Dendritic cell treated with granulocyte-macrophage colony-stimulating factor and Interleukin-4, amounts not matched to agents 40 ng/mL and 50 ng/mL, for 4 days (primary cell): ENCODE measurements at regions of chr7 and their contacts with region 1.

Region 1: DNA sequence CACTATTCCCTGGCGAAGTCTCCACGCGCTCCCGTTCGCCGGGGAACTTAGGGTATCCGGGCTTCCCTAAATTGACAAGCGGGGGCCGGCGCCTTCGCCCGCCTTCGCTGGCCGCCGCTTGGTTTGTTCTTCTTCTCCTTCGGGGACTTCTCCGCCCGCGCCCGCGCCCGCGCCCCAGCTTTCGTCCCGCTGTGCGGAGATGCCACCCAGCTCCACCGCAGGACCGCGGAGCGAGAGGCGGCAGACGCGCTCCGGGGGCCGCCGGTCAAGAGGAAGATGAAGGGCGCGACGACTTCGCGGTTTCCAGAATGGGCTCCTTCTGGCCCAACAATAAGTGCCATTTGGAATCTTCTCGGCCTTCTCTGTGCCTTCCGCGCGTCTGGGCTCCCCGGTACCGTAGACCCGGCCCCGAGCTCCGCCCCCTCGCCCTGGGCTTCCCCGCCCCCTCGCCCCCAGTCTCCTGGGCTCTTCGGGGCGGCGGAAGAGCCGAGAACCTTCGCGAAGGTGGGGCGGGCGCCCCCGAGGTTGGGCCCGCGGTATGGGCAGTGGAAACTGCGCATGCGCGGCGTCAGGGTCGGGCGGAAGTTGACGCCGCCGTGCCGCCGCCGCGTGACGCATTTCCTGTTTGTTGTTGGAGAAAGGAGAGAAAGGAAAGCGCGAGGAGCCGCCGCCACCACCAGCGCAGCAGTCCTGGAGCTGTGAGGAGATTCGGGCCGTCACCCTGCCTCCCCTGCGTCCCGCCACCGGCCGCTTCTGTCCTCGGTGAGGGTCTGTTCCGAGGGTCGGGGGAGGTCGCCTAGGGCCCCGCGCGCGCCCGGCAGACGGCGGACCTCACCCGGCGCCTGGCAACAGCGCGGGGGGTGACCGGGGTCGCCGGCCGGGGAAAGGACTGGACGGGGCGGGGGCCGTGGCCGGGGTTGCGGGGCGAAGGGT is at the start of gene DNAJB6:
- H3K4me3 Mint-ChIP-seq: peak within 1 kb of the TSS; percentile 78
- H3K27ac Mint-ChIP-seq: peak within 1 kb of the TSS; percentile 97
- H3K4me1 Mint-ChIP-seq: peaks cover 45% of the 10 kb centered on the region
- H3K27me3 Mint-ChIP-seq: no peaks in the 10 kb centered on the region

Region 2: GRCh38 chr7:157273208-157274093 is 63.2 kb before region 1 on chr7:
- intact Hi-C with region 1: loop called (anchors 1 kb)
- H3K4me3 Mint-ChIP-seq: peak overlapping the region; percentile 17
- H3K27ac Mint-ChIP-seq: peak overlapping the region; percentile 84
- H3K4me1 Mint-ChIP-seq: peaks cover 73% of the 10 kb centered on the region
- H3K27me3 Mint-ChIP-seq: peaks cover 1% of the 10 kb centered on the region

Region 3: GRCh38 chr7:157318012-157318709 is 18.5 kb before region 1 on chr7:
- intact Hi-C with region 1: loop called (anchors 1 kb)
- H3K4me3 Mint-ChIP-seq: peak overlapping the region; percentile 44
- H3K27ac Mint-ChIP-seq: peak overlapping the region; percentile 93
- H3K4me1 Mint-ChIP-seq: peaks cover 38% of the 10 kb centered on the region
- H3K27me3 Mint-ChIP-seq: no peaks in the 10 kb centered on the region

Region 4: GRCh38 chr7:157827045-157827862 is 490.6 kb after region 1 on chr7:
- intact Hi-C with region 1: no loop called
- H3K4me3 Mint-ChIP-seq: no peak overlapping the region
- H3K27ac Mint-ChIP-seq: no peak overlapping the region
- H3K4me1 Mint-ChIP-seq: no peaks in the 10 kb centered on the region
- H3K27me3 Mint-ChIP-seq: peaks cover 17% of the 10 kb centered on the region